Right ventricle myocardium inferior (tissue), 1 donor: ENCODE measurements at regions of chr7 and their contacts with region 1.

Region 1: GRCh38 chr7:50418086-50418515 is 32.0 kb downstream of the FIGNL1 start:
- DNase-seq: peak; percentile 80
- ATAC-seq: peak; percentile 85

Region 2: GRCh38 chr7:50092579-50093491 is 325.3 kb before region 1 on chr7 and contains the start of gene ZPBP:
- intact Hi-C with region 1: loop called (anchors 5 kb)
- DNase-seq: no peak
- ATAC-seq: peak; percentile 39
- total RNA-seq, gene ZPBP: not detected

Region 3: DNA sequence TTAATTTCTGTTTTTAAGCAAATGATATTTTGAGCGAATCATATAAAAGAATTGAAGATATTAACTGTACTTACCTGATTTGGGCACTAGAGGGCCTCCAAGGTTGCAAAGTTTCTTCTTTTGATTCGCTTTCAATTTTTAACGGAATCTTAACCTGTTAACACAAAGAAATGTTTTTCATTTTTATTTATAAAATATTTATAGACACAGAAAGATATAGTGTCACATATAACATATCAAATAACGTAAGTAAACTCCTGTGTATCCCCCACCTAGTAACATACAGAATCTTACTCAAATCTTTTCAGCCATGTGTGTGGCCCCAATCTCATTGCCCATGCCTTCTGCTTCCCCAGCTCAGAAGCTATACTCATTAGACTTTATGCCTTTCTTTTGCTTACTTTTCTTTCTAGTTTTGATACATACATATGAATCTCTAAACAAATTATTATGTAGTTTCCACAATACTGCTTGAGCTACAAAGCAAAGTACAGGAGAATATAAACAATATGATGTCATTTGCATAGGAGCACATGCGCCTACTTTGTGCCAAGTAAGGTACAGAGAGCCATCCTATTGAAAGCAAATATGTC is 275.6 kb before region 1 on chr7:
- intact Hi-C with region 1: loop called (anchors 5 kb)
- DNase-seq: no peak
- ATAC-seq: no peak

Region 4: GRCh38 chr7:50206453-50207250 is 211.4 kb before region 1 on chr7:
- intact Hi-C with region 1: loop called (anchors 5 kb)
- DNase-seq: no peak
- ATAC-seq: no peak

Region 5: DNA sequence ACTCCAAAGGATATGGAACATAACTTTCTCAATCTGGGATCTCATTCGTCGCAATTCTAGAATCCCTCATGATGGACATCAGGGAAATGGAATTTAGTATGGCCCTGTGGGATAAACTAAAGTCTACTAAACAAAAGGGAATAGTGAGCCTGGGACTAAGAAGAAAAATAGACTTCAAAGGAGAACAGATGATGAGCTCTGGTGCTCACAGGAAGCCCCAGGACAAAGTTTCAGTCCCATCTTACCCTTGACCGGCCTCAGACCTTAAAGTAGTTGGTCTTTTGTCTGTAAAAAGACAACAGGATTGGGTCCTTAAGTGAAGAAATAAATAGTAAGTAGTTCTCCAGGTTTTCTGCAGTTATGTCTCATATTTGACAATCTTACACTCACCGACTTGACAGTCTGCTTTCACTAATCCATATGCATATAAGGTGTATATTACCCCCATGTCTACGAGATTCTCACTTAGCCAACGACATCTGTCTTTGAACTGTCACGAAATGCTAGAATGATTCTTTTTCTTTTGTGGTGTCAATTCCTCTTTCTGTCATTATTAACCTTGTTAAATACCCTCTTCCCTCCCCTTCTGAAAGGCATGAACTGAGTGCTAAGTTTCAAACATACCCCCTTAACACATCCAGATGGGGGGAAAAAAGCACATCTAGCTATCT is 124.5 kb before region 1 on chr7:
- intact Hi-C with region 1: no loop called
- DNase-seq: no peak
- ATAC-seq: no peak

Region 6: DNA sequence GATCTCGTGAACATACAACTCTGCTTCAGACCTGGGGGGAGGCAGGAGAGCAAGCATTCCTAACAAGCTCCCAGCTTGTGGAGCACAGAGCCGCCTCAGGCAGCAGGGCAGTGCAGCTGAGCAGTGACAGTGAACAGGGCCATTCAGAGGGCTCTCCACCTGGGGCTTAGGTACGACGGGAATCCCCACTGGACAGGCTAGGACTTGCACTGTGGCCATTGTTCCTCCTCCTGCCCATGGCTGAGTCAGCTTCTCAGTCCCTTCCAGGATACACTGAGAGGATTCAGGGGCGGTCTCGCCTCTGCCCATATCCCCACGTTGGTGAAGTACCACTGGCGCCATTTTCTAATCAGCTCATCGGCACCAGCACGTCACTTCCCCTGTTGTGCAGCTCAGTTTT is 39.0 kb before region 1 on chr7:
- intact Hi-C with region 1: no loop called
- DNase-seq: no peak
- ATAC-seq: no peak